SK-N-SH (cell line): ENCODE measurements at regions of chr17 and their contacts with region 1.

Region 1: GRCh38 chr17:74368092-74369081 is 1.1 kb downstream of the GPR142 start:
- DNase-seq: peak; percentile 95
- H3K4me3 ChIP-seq: no peak overlapping the region; a peak in 1 of 4 replicates
- H3K27ac ChIP-seq: no peak overlapping the region
- H3K4me1 ChIP-seq: peaks cover 0 to 5% of the 10 kb centered on the region in 2 experiments; a peak in 1 of 4 replicates
- H3K27me3 ChIP-seq: no peaks in the 10 kb centered on the region
- CTCF ChIP-seq: peak; percentile 63
- EP300 ChIP-seq: no peak
- RAD21 ChIP-seq: peak; percentile 72

Region 2: GRCh38 chr17:74282587-74283370 is 85.6 kb before region 1 on chr17:
- CTCF ChIA-PET with region 1: interaction called, 10 read pairs
- POLR2A ChIA-PET with region 1: no interaction called
- DNase-seq: no peak
- H3K4me3 ChIP-seq: no peak overlapping the region
- H3K27ac ChIP-seq: no peak overlapping the region
- H3K4me1 ChIP-seq: no peaks in the 10 kb centered on the region
- H3K27me3 ChIP-seq: no peaks in the 10 kb centered on the region
- CTCF ChIP-seq: no peak
- EP300 ChIP-seq: no peak
- RAD21 ChIP-seq: no peak

Region 3: DNA sequence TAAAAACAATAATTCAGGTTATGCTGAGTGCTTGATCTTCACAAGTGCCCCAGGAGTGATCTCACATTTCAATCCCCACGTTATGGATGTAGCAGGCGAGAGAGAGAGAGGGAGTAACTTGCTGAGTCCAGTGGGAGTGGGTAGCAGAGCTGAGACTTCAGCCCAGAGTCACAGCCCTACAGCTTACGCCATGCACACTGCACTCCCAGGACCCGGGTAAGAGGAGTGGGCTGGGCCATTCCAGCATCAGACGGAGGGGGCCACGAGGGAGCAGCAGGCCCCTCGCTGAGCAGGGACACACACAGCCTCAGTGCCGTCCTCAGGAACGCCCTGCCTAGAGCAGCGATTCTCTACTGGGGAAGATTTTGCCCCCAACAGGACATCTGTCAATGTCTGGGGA is 52.2 kb before region 1 on chr17:
- CTCF ChIA-PET with region 1: interaction called, 11 read pairs
- POLR2A ChIA-PET with region 1: no interaction called
- DNase-seq: no peak
- H3K4me3 ChIP-seq: no peak overlapping the region
- H3K27ac ChIP-seq: no peak overlapping the region
- H3K4me1 ChIP-seq: no peaks in the 10 kb centered on the region
- H3K27me3 ChIP-seq: no peaks in the 10 kb centered on the region
- CTCF ChIP-seq: no peak
- EP300 ChIP-seq: no peak
- RAD21 ChIP-seq: no peak

Region 4: GRCh38 chr17:74379495-74380085 is 11.2 kb after region 1 on chr17:
- CTCF ChIA-PET with region 1: interaction called, 159 read pairs
- POLR2A ChIA-PET with region 1: no interaction called
- DNase-seq: peak; percentile 98
- H3K4me3 ChIP-seq: no peak overlapping the region
- H3K27ac ChIP-seq: no peak overlapping the region
- H3K4me1 ChIP-seq: peaks cover 0 to 2% of the 10 kb centered on the region in 2 experiments; a peak in 1 of 4 replicates
- H3K27me3 ChIP-seq: no peaks in the 10 kb centered on the region
- CTCF ChIP-seq: peak; percentile 52
- EP300 ChIP-seq: no peak
- RAD21 ChIP-seq: peak; percentile 99

Region 5: GRCh38 chr17:74437702-74438101 is 69.3 kb after region 1 on chr17:
- CTCF ChIA-PET with region 1: interaction called, 30 read pairs
- POLR2A ChIA-PET with region 1: interaction called, 3 read pairs
- DNase-seq: peak; percentile 68
- H3K4me3 ChIP-seq: no peak overlapping the region
- H3K27ac ChIP-seq: no peak overlapping the region
- H3K4me1 ChIP-seq: no peaks in the 10 kb centered on the region; a peak in 1 of 4 replicates
- H3K27me3 ChIP-seq: no peaks in the 10 kb centered on the region
- CTCF ChIP-seq: peak; percentile 67
- EP300 ChIP-seq: no peak
- RAD21 ChIP-seq: peak; percentile 55

Region 6: GRCh38 chr17:74493381-74493833 is 125.0 kb after region 1 on chr17:
- CTCF ChIA-PET with region 1: interaction called, 53 read pairs
- POLR2A ChIA-PET with region 1: no interaction called
- DNase-seq: peak; percentile 81
- H3K4me3 ChIP-seq: no peak overlapping the region; a peak in 1 of 4 replicates
- H3K27ac ChIP-seq: no peak overlapping the region
- H3K4me1 ChIP-seq: no peaks in the 10 kb centered on the region
- H3K27me3 ChIP-seq: no peaks in the 10 kb centered on the region
- CTCF ChIP-seq: peak; percentile 74
- EP300 ChIP-seq: no peak
- RAD21 ChIP-seq: peak; percentile 94

Region 7: GRCh38 chr17:74592087-74592990 is 224.0 kb after region 1 on chr17 and contains the start of gene CD300LD:
- CTCF ChIA-PET with region 1: interaction called, 13 read pairs
- POLR2A ChIA-PET with region 1: no interaction called
- DNase-seq: no peak
- H3K4me3 ChIP-seq: no peak within 1 kb of the TSS
- H3K27ac ChIP-seq: no peak within 1 kb of the TSS
- H3K4me1 ChIP-seq: no peaks in the 10 kb centered on the region
- H3K27me3 ChIP-seq: no peaks in the 10 kb centered on the region
- CTCF ChIP-seq: no peak
- EP300 ChIP-seq: no peak
- RAD21 ChIP-seq: no peak
- polyA plus RNA-seq, gene CD300LD: not detected in 2 replicates